ENCODE measurements at regions of chr10 and their contacts with region 1.

Region 1: GRCh38 chr10:103244663-103245271 is 920 bp upstream of the RPEL1 start:
- DNase-seq: no peak
- H3K4me3 ChIP-seq: no peak overlapping the region
- CTCF ChIP-seq: peak; percentile 87

Region 2: DNA sequence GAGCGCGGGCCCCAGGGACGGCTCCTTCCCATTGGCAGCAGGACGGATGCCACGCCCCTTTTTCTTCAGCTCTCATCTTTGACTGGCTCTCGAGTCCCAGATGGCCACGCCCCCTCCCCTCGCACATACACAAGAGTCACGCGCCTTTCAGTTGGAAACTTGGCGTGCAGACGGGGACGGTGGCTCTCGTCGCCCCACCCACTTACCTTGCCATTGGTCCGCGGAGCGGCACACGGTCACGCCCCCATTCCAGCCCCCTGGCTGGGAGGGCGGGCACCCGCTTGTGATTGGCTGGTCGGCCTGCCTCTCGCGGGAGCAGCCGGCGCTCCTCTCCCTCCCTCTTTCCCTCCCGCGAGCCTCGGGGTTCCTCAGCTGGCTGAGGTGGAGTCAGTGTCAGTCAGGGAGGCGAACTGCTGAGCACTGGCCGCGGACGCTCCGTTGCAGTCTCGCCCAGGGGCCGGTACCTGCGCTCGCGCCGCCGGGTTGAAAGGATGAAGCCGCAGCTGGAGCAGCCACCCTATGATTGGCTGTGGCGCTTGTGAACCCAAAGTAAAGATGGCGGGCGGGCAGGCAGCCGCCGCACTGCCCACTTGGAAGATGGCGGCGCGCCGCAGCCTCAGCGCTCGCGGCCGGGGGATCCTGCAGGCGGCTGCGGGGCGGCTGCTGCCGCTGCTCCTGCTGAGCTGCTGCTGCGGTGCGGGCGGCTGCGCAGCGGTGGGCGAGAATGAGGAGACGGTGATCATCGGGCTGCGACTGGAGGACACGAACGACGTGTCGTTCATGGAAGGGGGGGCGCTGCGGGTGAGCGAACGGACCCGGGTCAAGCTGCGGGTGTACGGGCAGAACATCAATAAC is 326.6 kb before region 1 on chr10 and contains the start of gene CNNM2:
- CTCF ChIA-PET with region 1: interaction called, 49 read pairs
- POLR2A ChIA-PET with region 1: no interaction called
- DNase-seq: peak; percentile 97
- H3K4me3 ChIP-seq: peak within 1 kb of the TSS; percentile 99
- CTCF ChIP-seq: no peak

Region 3: DNA sequence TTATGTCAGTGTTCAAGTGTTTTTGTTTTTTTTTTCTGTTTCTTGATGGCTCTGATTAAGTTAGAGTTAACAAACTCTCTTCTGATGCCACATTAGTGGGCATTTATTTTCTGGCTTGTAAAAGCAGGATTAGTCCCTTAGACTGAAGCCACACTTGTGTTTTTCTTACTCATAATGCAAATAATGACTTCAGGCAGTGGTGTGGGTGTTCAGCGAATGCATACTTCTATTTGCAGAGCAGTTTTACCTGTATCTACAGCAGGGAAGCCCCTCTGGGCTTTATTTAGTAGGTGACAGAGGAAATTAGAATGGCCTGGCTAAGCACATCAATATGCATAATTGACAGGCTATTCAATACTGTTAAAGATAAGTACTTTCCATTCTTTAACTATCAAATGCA is 246.8 kb before region 1 on chr10:
- CTCF ChIA-PET with region 1: no interaction called
- POLR2A ChIA-PET with region 1: no interaction called
- DNase-seq: no peak
- H3K4me3 ChIP-seq: no peak overlapping the region
- CTCF ChIP-seq: no peak

Region 4: DNA sequence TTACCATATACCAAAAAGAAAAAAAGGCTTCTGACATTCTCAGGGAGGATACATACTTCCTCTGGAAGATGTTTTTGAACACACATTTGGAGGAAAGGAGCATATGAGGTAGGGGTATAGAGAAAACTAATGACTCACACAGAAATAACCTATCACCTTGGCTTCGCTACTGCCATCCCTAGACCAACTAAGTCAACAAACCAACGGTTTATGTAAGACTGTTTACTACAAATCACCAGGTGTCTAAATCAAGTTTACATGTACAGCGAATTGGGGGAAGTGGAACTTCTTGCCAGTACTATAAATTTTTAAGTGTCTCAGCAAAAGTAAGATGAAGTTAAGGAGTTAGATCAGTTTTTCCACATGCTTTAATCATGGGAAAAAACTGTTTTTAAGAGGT is 148.6 kb before region 1 on chr10:
- CTCF ChIA-PET with region 1: interaction called, 62 read pairs
- POLR2A ChIA-PET with region 1: no interaction called
- DNase-seq: no peak
- H3K4me3 ChIP-seq: no peak overlapping the region
- CTCF ChIP-seq: no peak

Region 5: DNA sequence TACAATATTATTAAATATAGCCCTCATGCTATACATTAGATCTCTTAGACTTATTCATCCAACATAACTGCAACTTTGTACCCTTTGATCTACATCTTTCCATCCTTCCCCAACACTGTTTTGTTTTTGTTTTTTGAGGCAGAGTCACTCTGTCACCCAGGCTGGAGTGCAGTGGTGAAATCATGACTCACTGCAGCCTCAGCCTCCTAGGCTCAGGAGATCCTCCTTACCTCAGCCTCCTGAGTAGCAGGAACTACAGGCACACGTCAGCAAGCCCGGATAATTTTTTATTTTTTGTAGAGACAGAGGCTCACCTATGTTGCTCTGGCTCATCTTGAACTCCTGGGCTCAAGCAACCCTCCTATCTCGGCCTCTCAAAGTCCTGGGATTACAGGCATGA is 105.0 kb before region 1 on chr10:
- CTCF ChIA-PET with region 1: interaction called, 17 read pairs
- POLR2A ChIA-PET with region 1: no interaction called
- DNase-seq: no peak
- H3K4me3 ChIP-seq: no peak overlapping the region
- CTCF ChIP-seq: no peak

Region 6: GRCh38 chr10:103168486-103169311 is 76.1 kb before region 1 on chr10:
- CTCF ChIA-PET with region 1: interaction called, 16 read pairs
- POLR2A ChIA-PET with region 1: interaction called, 3 read pairs
- DNase-seq: peak; percentile 34
- H3K4me3 ChIP-seq: no peak overlapping the region
- CTCF ChIP-seq: no peak

Region 7: GRCh38 chr10:103592186-103593021 is 347.6 kb after region 1 on chr10:
- CTCF ChIA-PET with region 1: no interaction called
- POLR2A ChIA-PET with region 1: no interaction called
- DNase-seq: no peak
- H3K4me3 ChIP-seq: no peak overlapping the region
- CTCF ChIP-seq: peak; percentile 80